ENCODE measurements at regions of chr15 and their contacts with region 1.

Region 1: GRCh38 chr15:101251830-101252820 is at the start of gene CHSY1:
- DNase-seq: peak; percentile 97
- H3K4me3 Mint-ChIP-seq: peak within 1 kb of the TSS; percentile 91
- H3K27ac Mint-ChIP-seq: peak within 1 kb of the TSS; percentile 93
- H3K4me1 Mint-ChIP-seq: peaks cover 57% of the 10 kb centered on the region
- H3K27me3 Mint-ChIP-seq: no peaks in the 10 kb centered on the region
- total RNA-seq, gene CHSY1: 61.7 and 62.6 TPM in 2 replicates

Region 2: DNA sequence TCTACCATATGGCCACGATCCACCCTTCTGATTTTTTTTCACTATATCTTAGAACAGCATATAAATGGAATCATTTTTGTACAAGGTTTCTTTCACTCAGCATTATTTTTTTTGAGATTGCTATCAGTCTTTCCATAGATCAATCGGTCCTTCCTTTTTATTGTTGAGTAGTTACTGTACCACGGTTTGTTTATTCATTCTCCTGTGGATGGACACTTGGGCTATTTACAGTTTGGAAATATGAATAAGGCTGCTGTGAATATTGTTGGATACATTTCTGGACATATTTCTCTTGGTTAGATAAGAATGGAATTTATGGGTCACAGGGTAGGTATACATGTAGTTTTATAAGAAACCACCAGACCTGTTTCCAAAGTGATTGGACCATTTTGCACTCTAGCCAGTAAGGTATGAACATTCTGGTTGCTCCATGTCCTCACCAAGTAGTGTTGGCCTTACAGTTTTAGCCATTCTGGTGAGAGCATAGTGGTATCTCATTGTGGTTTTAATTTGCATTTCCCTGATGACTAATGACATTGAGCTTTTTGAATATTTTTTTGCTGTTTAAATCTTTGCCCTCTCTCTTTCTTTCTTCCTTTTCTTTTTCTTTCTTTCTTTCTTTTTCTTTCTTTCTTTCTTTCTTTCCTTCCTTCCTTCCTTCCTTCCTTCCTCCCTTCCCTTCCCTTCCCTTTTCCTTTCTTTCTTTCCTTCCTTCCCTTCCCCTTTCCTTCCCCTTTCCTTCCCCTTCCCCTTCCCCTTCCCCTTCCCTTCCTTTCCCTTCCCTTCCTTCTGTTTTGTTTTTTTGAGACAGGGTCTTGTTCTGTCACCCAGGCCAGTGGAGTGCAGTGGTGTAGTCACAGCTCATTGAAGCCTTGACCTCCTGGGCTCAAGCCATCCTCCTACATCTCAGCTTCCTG is 283.8 kb before region 1 on chr15:
- intact Hi-C with region 1: no loop called
- DNase-seq: no peak
- H3K4me3 Mint-ChIP-seq: no peak overlapping the region
- H3K27ac Mint-ChIP-seq: no peak overlapping the region
- H3K4me1 Mint-ChIP-seq: no peaks in the 10 kb centered on the region
- H3K27me3 Mint-ChIP-seq: peaks cover 47% of the 10 kb centered on the region

Region 3: GRCh38 chr15:101159096-101159935 is 92.8 kb before region 1 on chr15:
- intact Hi-C with region 1: loop called (anchors 2 kb)
- DNase-seq: peak; percentile 80
- H3K4me3 Mint-ChIP-seq: peak overlapping the region; percentile 64
- H3K27ac Mint-ChIP-seq: peak overlapping the region; percentile 90
- H3K4me1 Mint-ChIP-seq: peaks cover 35% of the 10 kb centered on the region
- H3K27me3 Mint-ChIP-seq: no peaks in the 10 kb centered on the region

Measured in activated CD4-positive, alpha-beta T cell treated with anti-CD3 and anti-CD28 coated beads, Interleukin-2, amount 10 ng/mL, durations not matched to agents 24 days and 14 days (primary cell).